ENCODE measurements at regions of chr6 and their contacts with region 1.

Region 1: DNA sequence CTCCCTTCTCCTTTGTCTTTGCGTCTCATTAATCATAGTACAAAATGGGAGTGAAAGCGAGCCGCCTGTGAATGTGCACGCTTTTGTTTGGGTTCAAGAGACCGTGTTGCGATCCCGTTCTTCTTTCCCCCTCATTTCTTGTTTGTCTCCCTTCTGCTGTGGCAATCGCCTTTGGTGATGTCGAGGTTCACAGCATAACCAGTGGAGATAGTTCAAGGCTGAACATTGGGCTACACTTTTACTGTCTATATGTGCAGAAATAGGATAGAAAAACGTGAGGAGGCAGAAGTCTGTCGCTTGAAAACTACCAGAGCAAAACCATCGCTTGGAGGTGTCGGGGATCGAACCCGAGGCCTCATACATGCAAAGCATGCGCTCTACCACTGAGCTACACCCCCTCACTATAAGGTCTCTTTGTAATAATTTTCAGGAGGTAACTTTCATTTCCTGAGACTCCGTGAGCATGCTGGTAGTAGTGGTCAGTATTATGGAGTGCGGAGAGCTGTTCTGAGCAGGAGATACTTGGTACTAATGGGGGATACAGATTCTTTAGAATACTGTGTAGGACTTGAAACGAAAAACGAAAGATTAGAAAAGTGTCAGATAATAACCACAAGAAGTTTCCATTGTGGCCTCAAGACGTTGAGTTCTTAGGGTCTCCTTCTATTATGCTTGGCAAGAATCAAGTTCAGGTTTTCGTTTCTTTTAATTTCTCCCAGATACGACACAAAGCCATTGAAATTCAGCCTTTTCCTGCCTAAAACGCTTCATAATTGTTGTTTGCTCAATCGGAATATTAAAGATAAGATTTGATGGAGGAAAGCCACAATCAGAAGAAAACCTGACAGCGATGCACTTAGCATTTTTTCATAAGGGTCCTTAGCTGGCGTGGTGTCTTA is 106.6 kb downstream of the TRIM27 start:
- DNase-seq: peak; percentile 67
- ATAC-seq: peak; percentile 80
- H3K4me3 ChIP-seq: peak overlapping the region; percentile 48 to 65 (median 49)
- H3K27ac ChIP-seq: no peak overlapping the region
- H3K4me1 ChIP-seq: peaks cover 50% of the 10 kb centered on the region
- H3K27me3 ChIP-seq: peaks cover 11 to 41% of the 10 kb centered on the region in 2 experiments
- CTCF ChIP-seq: no peak
- EP300 ChIP-seq: no peak
- POLR2A ChIP-seq: no peak
- RAD21 ChIP-seq: no peak

Region 2: GRCh38 chr6:28802417-28803336 is 14.5 kb before region 1 on chr6:
- CTCF ChIA-PET with region 1: no interaction called
- POLR2A ChIA-PET with region 1: no interaction called
- in situ Hi-C with region 1: no loop called
- intact Hi-C with region 1: loop called (anchors 2 kb)
- DNase-seq: peak; percentile 62
- ATAC-seq: peak; percentile 77
- H3K4me3 ChIP-seq: peak overlapping the region; percentile 28 to 49 (median 45)
- H3K27ac ChIP-seq: no peak overlapping the region
- H3K4me1 ChIP-seq: peaks cover 28% of the 10 kb centered on the region
- H3K27me3 ChIP-seq: no peaks in the 10 kb centered on the region
- CTCF ChIP-seq: no peak
- EP300 ChIP-seq: no peak; a peak in 1 of 4 replicates
- POLR2A ChIP-seq: no peak
- RAD21 ChIP-seq: no peak

Measured in HepG2 (cell line).